GM12878 (cell line): ENCODE measurements at regions of chr1 and their contacts with region 1.

Region 1: DNA sequence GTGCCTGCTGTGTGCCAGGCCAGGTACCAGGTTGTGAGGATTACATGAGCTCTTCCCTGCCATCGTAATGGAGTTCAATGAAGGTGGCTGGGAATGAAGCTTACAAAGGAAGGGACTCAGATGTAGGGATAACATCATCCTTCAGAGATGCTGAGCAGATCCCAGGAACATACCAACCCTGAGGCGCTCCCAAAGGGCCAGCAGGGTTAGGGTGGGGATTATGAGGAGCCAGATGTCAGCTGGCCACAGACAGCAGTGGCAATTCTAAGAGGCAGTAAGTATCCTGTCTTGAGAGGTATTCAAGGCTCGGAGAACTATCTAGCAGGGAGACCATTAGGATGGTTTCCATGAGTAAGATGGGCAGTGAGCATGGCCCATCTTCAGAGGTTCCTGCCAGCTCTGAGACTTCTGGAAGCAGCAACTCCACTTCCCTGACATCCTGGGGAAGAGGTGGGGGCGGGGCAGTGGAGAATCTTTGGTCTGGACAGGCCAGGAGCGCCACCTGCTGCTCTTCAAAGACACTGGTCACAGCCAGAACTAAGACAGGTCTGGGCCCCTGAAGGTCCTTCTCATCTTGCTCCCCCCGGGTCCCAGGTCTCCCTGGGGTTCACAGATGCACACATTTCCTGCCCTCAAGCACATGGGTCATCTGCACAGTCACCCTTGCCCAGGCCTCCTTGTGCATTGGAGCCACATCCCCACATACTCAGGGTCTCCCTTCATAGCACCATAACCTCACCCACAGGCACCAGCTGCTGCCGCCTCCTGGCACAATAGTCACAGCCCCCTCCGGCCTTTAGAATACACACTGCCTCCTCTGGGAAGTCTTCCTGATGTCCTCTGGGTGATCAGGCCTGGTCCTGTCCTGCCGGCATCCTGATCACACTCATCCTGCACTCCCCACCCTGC is 2.7 kb upstream of the SDC3 start:
- DNase-seq: no peak
- ATAC-seq: peak; percentile 84
- H3K4me3 ChIP-seq: no peak overlapping the region
- H3K27ac ChIP-seq: no peak overlapping the region
- H3K4me1 ChIP-seq: no peaks in the 10 kb centered on the region
- H3K27me3 ChIP-seq: peaks cover 16% of the 10 kb centered on the region in 2 experiments
- CTCF ChIP-seq: peak; percentile 71 to 82 (median 79)
- EP300 ChIP-seq: no peak
- POLR2A ChIP-seq: no peak
- RAD21 ChIP-seq: peak; percentile 88

Region 2: DNA sequence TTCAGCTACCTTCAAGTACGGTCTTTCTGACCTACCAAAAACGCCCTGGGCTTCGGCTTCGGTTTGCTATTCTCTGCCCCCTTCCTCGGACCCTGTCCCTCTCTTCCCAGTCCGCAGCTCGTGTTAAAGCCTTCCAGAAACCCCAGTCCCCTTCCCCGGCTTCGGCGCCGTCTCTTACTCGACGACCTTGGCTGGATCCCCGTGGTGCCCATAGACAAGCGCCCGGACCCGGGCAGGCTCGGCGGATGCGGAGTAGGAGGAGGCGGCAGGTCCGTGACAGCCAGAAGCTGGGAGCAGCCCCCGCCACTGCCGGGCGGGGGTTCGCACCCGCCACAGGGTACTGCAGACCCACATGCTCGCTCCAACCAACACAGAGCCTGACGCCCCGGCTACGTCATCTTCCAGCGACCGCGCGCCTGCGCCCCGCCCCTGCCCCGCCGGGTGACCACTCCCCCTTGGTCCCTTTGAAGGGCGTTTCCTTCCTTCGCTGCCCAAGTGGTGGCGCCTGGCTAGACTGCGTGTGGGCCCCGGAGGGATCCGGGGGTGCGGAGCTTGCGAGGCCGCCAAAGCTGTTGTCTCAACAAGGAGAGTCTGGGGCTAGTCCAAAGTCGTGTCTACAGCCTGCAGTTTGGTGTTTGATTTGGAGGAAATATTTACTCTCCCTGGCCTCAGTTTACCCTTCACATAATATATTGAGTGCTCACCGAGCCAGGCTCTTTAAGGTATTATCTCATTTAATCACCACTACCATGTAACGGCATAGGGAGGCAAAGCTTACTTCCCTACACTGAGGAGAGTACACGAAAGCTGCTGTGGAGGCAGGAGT is 1680.5 kb before region 1 on chr1 and contains the start of gene MECR:
- CTCF ChIA-PET with region 1: no interaction called
- POLR2A ChIA-PET with region 1: no interaction called
- RAD21 ChIA-PET with region 1: no interaction called
- SMC1A ChIA-PET with region 1: no interaction called
- in situ Hi-C with region 1: loop called (anchors 10 kb)
- intact Hi-C with region 1: no loop called
- DNase-seq: peak; percentile 82
- ATAC-seq: peak; percentile 99
- H3K4me3 ChIP-seq: peak within 1 kb of the TSS; percentile 75
- H3K27ac ChIP-seq: peak within 1 kb of the TSS; percentile 52
- H3K4me1 ChIP-seq: peaks cover 4% of the 10 kb centered on the region; the same call in 1 of the 2 replicates
- H3K27me3 ChIP-seq: no peaks in the 10 kb centered on the region
- CTCF ChIP-seq: peak; percentile 10 to 34 (median 26); a peak in 2 of 6 replicates
- EP300 ChIP-seq: 0 out of 4 replicates have a peak, but pooled peaks of 1 of the 2 experiments have one; percentile 16
- POLR2A ChIP-seq: peak; percentile 93
- RAD21 ChIP-seq: no peak
- polyA plus RNA-seq, gene MECR: 7.6 to 16.0 TPM

Region 3: GRCh38 chr1:30809514-30810263 is 101.6 kb before region 1 on chr1:
- CTCF ChIA-PET with region 1: interaction called, 303 read pairs
- POLR2A ChIA-PET with region 1: no interaction called
- RAD21 ChIA-PET with region 1: interaction called, 154 read pairs
- SMC1A ChIA-PET with region 1: interaction called, 160 read pairs
- in situ Hi-C with region 1: loop called (anchors 5 kb)
- intact Hi-C with region 1: no loop called
- DNase-seq: no peak
- ATAC-seq: no peak
- H3K4me3 ChIP-seq: no peak overlapping the region
- H3K27ac ChIP-seq: no peak overlapping the region
- H3K4me1 ChIP-seq: no peaks in the 10 kb centered on the region
- H3K27me3 ChIP-seq: peaks cover 27 to 29% of the 10 kb centered on the region in 2 experiments
- CTCF ChIP-seq: no peak
- EP300 ChIP-seq: no peak
- POLR2A ChIP-seq: no peak
- RAD21 ChIP-seq: no peak

Region 4: GRCh38 chr1:30966690-30967369 is 55.5 kb after region 1 on chr1:
- CTCF ChIA-PET with region 1: no interaction called
- POLR2A ChIA-PET with region 1: no interaction called
- RAD21 ChIA-PET with region 1: no interaction called
- SMC1A ChIA-PET with region 1: no interaction called
- in situ Hi-C with region 1: no loop called
- intact Hi-C with region 1: no loop called
- DNase-seq: no peak
- ATAC-seq: no peak
- H3K4me3 ChIP-seq: no peak overlapping the region
- H3K27ac ChIP-seq: no peak overlapping the region
- H3K4me1 ChIP-seq: peaks cover 3% of the 10 kb centered on the region; the same call in 1 of the 2 replicates
- H3K27me3 ChIP-seq: no peaks in the 10 kb centered on the region
- CTCF ChIP-seq: no peak
- EP300 ChIP-seq: no peak
- POLR2A ChIP-seq: no peak
- RAD21 ChIP-seq: no peak

Region 5: GRCh38 chr1:31218705-31219104 is 307.4 kb after region 1 on chr1:
- CTCF ChIA-PET with region 1: no interaction called
- POLR2A ChIA-PET with region 1: no interaction called
- RAD21 ChIA-PET with region 1: no interaction called
- SMC1A ChIA-PET with region 1: no interaction called
- in situ Hi-C with region 1: no loop called
- intact Hi-C with region 1: no loop called
- DNase-seq: no peak
- ATAC-seq: peak; percentile 26; the same call in 1 of the 3 replicates
- H3K4me3 ChIP-seq: no peak overlapping the region
- H3K27ac ChIP-seq: no peak overlapping the region
- H3K4me1 ChIP-seq: no peaks in the 10 kb centered on the region
- H3K27me3 ChIP-seq: no peaks in the 10 kb centered on the region
- CTCF ChIP-seq: no peak
- EP300 ChIP-seq: no peak
- POLR2A ChIP-seq: no peak
- RAD21 ChIP-seq: no peak